Head of caudate nucleus (tissue), 42 donors: ENCODE measurements at regions of chr3 and their contacts with region 1.

Region 1: GRCh38 chr3:88203642-88204055 is 53.9 kb downstream of the C3orf38 start:
- DNase-seq: peak; percentile 35 to 94 (median 84)

Region 2: DNA sequence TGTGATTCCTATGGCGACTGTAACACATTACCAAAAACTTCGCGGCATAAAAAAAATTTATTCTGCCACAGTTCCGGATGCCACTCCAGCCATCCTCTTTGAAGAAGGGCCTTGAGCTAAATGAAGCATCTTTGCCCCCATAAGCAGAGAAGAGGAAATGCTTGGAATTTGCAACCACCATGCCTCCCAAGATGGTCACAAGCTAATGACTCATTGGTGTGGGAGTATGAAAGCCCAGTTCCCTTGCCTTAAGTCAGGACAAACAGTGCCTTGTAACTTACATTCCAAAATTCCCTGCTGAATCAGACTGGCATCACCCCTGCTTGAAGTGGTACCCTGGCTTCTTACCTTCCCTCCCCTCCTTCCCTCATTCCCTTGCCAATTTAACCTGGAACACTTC is 1981.2 kb after region 1 on chr3:
- intact Hi-C with region 1: loop called (anchors 10 kb)
- DNase-seq: no peak